Transverse colon (tissue), 4 donors: ENCODE measurements at regions of chr10 and their contacts with region 1.

Region 1: DNA sequence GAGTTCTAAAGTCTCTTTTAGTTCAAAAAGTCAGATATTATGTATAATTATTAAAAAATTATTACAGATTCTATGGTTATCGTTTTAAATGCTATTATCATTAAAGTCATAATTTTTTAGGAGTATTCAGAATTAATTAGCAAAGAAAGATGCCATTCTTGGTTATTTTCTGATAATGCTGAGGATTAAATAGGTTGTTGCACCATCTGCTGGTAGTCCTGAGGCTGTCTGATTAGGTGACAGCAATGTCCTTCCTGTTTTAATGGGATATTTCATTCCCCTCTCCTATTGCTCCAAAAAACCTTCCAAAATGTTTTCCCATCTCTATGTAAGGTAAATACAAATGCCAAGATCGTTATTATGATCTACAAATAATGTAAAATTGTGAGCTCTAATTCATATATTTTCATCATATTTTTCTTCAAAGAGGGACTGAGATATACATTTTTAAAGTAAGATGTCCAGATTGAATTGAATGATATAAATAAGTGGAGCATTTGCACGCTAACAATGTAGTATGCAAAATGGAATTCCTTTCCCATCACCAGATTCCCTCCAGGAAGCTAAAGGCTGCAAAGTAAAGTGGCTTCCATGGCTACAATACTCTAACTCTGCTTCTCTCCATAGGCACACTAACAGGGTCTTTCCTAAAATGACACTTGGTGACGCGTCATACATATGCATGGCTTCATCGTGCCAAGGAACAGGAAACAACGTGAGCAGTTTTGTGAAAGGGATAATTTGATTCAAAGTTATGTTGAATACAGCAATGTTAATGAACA is 58.8 kb upstream of the AKR1E2 start:
- DNase-seq: no peak
- H3K4me3 ChIP-seq: no peak overlapping the region
- H3K27ac ChIP-seq: no peak overlapping the region
- H3K4me1 ChIP-seq: peaks cover 0 to 19% (median 7%) of the 10 kb centered on the region in 4 donors
- H3K27me3 ChIP-seq: no peaks in the 10 kb centered on the region
- CTCF ChIP-seq: peak; percentile 59 to 81 (median 76)
- EP300 ChIP-seq: no peak
- POLR2A ChIP-seq: no peak

Region 2: GRCh38 chr10:3197348-3198003 is 1569.7 kb before region 1 on chr10:
- in situ Hi-C with region 1: loop called in 2 of 4 experiments (anchors 10 to 25 kb)
- intact Hi-C with region 1: loop called (anchors 5 kb)
- DNase-seq: peak; percentile 85
- H3K4me3 ChIP-seq: peak overlapping the region in 1 of 4 donors; percentile 20
- H3K27ac ChIP-seq: peak overlapping the region in 3 of 4 donors; percentile 9 to 42 (median 29)
- H3K4me1 ChIP-seq: peaks cover 9 to 22% (median 16%) of the 10 kb centered on the region in 4 donors
- H3K27me3 ChIP-seq: peaks cover 12% of the 10 kb centered on the region
- CTCF ChIP-seq: peak; percentile 86 to 90 (median 88)
- EP300 ChIP-seq: no peak
- POLR2A ChIP-seq: no peak

Region 3: DNA sequence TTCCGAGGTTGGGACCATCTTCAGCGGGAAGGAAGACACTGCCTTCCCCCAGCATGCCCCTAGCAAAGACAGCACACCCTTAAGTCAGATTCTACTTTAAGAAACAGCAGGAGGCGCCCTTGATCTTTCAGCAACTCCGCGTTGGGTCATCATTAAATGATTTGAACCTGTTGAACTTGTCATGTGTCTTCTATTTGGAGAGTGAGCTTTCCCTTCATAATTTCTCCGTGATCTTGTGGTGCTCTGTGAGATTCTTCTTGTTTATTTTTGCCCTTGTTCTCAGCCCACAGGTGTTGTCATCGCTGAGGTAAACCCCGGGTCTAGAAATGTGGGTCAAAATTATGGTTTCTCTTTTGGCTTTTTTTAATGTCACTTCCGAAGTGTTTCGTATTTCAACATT is 1545.2 kb before region 1 on chr10:
- in situ Hi-C with region 1: loop called in 3 of 4 experiments (anchors 25 kb)
- intact Hi-C with region 1: no loop called
- DNase-seq: no peak
- H3K4me3 ChIP-seq: no peak overlapping the region
- H3K27ac ChIP-seq: no peak overlapping the region
- H3K4me1 ChIP-seq: peaks cover 0 to 4% (median under 1%) of the 10 kb centered on the region in 4 donors
- H3K27me3 ChIP-seq: no peaks in the 10 kb centered on the region
- CTCF ChIP-seq: no peak
- EP300 ChIP-seq: no peak
- POLR2A ChIP-seq: no peak

Region 4: GRCh38 chr10:3239066-3239919 is 1527.9 kb before region 1 on chr10:
- in situ Hi-C with region 1: loop called in 3 of 4 experiments (anchors 10 to 25 kb)
- intact Hi-C with region 1: loop called (anchors 10 kb)
- DNase-seq: peak; percentile 83
- H3K4me3 ChIP-seq: no peak overlapping the region
- H3K27ac ChIP-seq: no peak overlapping the region
- H3K4me1 ChIP-seq: peaks cover 0 to 7% (median 0%) of the 10 kb centered on the region in 4 donors
- H3K27me3 ChIP-seq: no peaks in the 10 kb centered on the region
- CTCF ChIP-seq: peak; percentile 88 to 95 (median 91)
- EP300 ChIP-seq: no peak
- POLR2A ChIP-seq: no peak

Region 5: DNA sequence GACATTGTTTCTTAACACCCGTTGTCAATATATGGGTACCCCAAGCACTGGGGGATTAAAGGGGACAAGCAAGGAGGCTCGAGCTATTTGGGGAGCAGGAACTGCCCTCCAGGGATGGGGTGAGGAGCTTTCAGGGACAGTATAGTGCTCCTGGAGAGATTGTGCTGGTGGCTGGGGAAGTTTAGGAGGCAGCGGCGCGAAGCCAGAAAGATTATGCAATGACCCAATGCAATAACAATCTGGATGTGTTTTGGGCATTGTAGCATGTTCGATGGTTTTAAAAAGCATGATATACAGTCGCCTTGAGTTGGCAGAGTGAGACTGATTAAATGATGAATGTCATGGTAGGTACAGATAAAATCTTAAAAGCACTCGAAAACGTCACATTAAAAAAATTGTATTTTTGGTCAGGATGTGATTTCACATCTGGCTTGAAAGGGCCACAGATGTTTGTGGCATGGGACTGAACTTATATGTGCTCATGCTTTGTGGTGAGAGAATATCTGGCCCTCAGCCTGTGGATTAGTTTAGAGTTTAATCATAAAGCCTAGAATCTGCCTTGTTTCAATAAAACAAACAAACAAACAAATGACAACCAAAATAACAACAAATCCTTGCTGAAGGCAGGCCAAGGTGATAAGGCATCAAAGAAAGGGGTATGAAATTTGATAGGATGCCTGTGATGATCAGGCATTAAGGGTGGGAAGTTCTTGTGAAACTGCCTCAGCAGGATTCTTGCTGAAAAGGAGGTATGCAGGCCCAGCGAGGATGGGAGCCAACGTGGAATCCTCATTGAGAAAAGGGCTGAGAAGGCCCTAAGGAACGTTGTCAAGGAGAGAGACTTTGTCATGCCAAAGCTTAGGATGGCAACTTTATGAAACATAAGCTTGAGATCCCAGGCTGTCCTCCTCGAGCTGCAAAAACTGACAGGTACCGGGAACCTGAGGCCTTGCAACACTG is 565.1 kb before region 1 on chr10:
- in situ Hi-C with region 1: loop called in 1 of 4 experiments (anchors 25 kb)
- intact Hi-C with region 1: no loop called
- DNase-seq: no peak
- H3K4me3 ChIP-seq: no peak overlapping the region
- H3K27ac ChIP-seq: no peak overlapping the region
- H3K4me1 ChIP-seq: peaks cover 0 to 33% (median 11%) of the 10 kb centered on the region in 4 donors
- H3K27me3 ChIP-seq: no peaks in the 10 kb centered on the region
- CTCF ChIP-seq: no peak
- EP300 ChIP-seq: no peak
- POLR2A ChIP-seq: no peak

Region 6: DNA sequence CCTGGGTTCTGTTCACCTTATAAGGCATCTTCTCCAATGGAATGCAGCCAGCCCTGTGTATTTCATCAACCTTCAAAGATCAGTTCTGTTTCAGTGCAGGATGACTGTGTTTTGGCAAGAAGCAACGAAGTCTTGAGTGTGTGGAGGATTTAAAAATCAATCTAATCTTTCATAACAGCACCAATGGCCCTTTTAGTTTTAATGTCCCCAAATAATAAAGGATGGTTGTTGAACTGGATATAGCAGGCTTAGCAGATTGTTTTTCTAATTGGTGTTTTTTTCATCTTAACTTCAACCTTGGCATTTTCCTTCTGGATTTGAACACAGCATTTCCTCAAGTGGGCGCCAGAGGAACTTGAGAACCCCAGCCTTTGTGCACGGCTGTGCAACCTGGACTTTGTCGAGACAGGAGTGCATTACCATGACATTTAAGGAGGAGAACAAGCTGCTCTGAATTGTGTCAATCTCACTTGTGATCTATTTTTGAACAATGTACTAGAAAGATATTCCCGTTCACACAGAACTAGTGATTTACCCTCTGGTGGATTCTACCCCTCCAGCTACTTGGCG is 254.5 kb before region 1 on chr10:
- in situ Hi-C with region 1: loop called in 2 of 4 experiments (anchors 25 kb)
- intact Hi-C with region 1: no loop called
- DNase-seq: peak; percentile 44
- H3K4me3 ChIP-seq: no peak overlapping the region
- H3K27ac ChIP-seq: no peak overlapping the region
- H3K4me1 ChIP-seq: peaks cover 0 to 20% (median 0%) of the 10 kb centered on the region in 4 donors
- H3K27me3 ChIP-seq: no peaks in the 10 kb centered on the region
- CTCF ChIP-seq: peak; percentile 32 to 68 (median 49)
- EP300 ChIP-seq: no peak
- POLR2A ChIP-seq: no peak

Region 7: GRCh38 chr10:4953405-4953804 is 186.2 kb after region 1 on chr10:
- in situ Hi-C with region 1: no loop called
- intact Hi-C with region 1: no loop called
- DNase-seq: no peak
- H3K4me3 ChIP-seq: no peak overlapping the region
- H3K27ac ChIP-seq: no peak overlapping the region
- H3K4me1 ChIP-seq: peaks cover 0 to 2% (median under 1%) of the 10 kb centered on the region in 4 donors
- H3K27me3 ChIP-seq: no peaks in the 10 kb centered on the region
- CTCF ChIP-seq: no peak
- EP300 ChIP-seq: no peak
- POLR2A ChIP-seq: no peak